ENCODE measurements at regions of chr14 and their contacts with region 1.

Region 1: DNA sequence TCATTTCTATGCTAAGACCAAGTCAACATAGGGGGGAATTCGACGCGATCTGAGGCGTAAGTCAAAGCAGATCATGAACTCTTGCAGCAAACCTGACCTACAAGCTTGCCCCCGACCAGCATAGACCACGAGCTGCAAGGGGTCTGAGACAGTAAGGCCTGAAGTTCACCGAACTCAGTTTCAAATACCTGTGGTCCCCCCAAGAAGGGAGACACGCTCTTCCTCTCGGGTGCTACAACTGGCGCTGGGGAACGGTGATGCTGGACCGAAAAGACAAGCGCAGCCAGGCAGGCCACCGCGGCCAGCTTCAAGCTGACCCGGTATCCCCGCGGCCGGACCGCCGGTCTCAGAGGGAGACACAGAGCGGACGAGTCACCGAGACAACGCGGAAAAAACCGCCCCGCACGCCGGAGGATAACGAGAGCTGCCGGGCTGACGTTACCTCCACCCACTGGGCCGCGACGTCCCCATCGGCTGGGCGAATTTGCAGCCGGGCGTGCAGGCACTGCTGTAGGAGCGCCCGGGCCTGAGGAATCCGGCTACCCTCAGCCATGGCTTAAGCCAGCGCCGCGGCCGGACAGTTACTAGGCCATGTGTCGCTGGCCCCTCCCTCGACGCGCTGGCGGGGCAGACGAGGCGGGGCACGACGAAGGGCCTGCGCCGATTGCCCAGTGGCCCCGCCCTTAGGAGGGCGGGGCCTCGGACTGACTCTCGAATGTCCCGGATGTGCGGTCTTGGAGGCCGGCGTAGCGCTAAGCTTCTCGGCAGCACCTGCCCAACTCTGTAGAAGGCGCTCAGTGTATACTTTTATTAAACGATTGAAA is at the start of gene DTD2:
- DNase-seq: peak; percentile 89
- H3K4me3 Mint-ChIP-seq: peak within 1 kb of the TSS; percentile 96
- H3K27ac Mint-ChIP-seq: peak within 1 kb of the TSS; percentile 95
- H3K4me1 Mint-ChIP-seq: peaks cover 43% of the 10 kb centered on the region
- H3K27me3 Mint-ChIP-seq: peaks cover 2% of the 10 kb centered on the region
- total RNA-seq, gene DTD2: 29.0 and 30.6 TPM in 2 replicates

Region 2: DNA sequence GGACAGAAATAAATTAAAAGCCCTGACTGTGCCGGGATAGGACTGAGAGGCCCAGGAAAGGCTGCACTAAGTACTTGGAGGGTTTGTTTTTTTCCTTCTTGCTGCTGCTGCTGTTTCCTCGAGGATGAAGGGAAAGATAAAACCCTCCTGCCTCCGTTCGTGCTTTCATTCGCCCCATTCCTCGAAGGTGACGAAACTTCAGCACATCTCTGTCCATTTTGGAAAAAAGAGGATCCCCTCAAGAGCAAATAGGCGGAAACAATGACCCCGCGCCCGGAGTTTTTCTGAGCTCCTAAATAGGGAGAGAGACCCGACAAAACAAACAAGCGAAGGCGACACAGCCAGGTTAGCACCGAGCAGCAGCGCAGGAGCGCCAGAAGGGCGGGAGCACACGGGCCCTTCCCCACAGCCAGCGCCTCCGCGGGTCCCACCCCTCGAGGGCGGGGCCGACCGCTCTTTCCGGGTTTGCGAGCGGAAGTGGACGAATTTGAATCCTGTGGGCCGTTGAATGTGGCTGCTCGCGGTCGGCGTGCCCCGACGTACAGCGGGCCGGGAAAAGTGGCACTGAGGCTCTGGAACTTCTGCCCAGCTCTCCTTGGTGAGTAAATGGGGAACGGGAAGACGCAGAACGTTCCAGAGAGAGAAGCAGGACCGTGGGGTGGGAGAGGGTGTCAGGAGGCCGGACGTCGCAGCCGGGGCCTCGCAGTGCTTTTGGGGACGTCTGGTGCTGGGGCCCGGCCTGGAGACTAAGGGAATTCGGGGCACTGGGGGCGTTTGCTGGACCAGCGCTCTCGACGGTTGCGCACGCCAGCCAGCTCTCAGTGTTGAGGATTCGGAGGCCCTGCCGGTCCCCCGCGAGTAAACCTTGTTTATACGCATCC is 898.1 kb before region 1 on chr14 and contains the start of gene G2E3:
- intact Hi-C with region 1: loop called (anchors 1 kb)
- DNase-seq: peak; percentile 90
- H3K4me3 Mint-ChIP-seq: peak within 1 kb of the TSS; percentile 100
- H3K27ac Mint-ChIP-seq: peak within 1 kb of the TSS; percentile 99
- H3K4me1 Mint-ChIP-seq: peaks cover 33% of the 10 kb centered on the region
- H3K27me3 Mint-ChIP-seq: peaks cover 4% of the 10 kb centered on the region
- total RNA-seq, gene G2E3: 21.5 and 24.1 TPM in 2 replicates

Region 3: DNA sequence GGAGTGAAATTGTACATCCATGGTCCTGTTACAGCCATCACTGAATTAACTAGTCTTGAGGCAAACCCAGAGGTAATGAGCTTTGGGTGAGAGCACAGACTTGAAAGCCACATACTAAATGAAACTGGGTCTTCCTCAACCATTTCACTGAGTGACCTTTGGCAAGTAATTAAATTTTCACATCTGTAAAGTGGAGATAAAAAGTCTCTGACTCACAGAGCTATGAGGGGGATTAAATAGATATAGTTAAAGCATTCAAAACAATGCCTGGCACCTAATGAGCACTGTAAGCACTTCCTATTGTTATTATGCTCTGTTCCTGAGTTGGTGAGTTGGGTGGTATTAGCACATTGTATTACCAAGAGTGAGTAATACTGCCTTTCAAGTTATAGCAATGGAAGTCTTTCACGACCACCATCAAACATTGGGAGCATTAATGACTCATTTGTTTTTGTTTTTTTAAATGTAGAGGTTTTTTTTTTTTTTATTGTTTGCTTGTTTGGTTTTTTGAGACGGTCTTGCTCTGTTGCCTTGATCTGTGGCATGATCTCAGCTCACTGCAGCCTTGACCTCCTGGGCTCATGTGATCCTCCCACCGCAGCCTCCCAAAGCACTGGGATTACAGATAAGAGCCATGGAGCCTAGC is 418.4 kb before region 1 on chr14:
- intact Hi-C with region 1: no loop called
- DNase-seq: no peak
- H3K4me3 Mint-ChIP-seq: no peak overlapping the region
- H3K27ac Mint-ChIP-seq: no peak overlapping the region
- H3K4me1 Mint-ChIP-seq: no peaks in the 10 kb centered on the region
- H3K27me3 Mint-ChIP-seq: no peaks in the 10 kb centered on the region

Region 4: DNA sequence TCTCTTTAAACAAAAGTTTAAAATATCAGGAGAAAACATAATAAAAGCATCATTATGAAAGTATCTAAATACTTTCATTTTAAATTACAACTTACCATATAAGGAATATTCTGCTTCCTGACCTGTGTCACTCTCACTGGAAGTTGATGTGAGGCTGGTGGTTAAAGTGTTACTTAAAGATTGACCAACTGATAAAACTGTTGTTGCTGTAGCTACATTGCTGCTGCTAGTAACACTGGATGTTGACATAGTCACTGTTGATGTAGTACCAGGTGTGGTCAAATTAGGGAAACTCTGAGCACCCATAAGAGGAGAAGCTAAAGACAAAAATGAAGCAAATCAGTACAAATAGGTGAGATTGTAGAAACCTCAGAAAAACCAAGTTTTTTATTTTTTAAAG is 329.4 kb before region 1 on chr14:
- intact Hi-C with region 1: loop called (anchors 10 kb)
- DNase-seq: peak; percentile 56
- H3K4me3 Mint-ChIP-seq: peak overlapping the region; percentile 16
- H3K27ac Mint-ChIP-seq: peak overlapping the region; percentile 64
- H3K4me1 Mint-ChIP-seq: peaks cover 31% of the 10 kb centered on the region
- H3K27me3 Mint-ChIP-seq: no peaks in the 10 kb centered on the region

Region 5: GRCh38 chr14:31420319-31421111 is 36.5 kb before region 1 on chr14 and contains the start of gene HEATR5A:
- intact Hi-C with region 1: loop called (anchors 1 kb)
- DNase-seq: peak; percentile 92
- H3K4me3 Mint-ChIP-seq: peak within 1 kb of the TSS; percentile 98
- H3K27ac Mint-ChIP-seq: peak within 1 kb of the TSS; percentile 90
- H3K4me1 Mint-ChIP-seq: peaks cover 26% of the 10 kb centered on the region
- H3K27me3 Mint-ChIP-seq: peaks cover 2% of the 10 kb centered on the region
- total RNA-seq, gene HEATR5A: 26.4 and 31.0 TPM in 2 replicates

Region 6: DNA sequence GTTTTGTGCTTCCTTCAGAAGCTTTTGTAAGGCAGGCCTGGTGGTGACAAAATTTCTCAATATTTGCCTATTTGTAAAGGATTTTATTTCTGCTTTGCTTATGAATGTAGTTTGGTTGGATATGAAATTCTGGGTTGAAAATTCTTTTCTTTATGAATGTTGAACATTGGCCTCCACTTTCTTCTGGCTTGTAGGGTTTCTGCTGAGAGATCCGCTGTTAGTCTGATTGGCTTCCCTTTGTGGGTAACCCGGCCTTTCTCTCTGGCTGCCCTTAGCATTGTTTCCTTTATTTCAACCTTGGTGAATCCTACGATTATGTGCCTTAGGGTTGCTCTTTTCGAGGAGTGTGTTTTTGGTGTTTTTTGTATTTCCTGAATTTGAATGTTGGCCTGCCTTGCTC is 162.4 kb after region 1 on chr14:
- intact Hi-C with region 1: no loop called
- DNase-seq: no peak
- H3K4me3 Mint-ChIP-seq: no peak overlapping the region
- H3K27ac Mint-ChIP-seq: no peak overlapping the region
- H3K4me1 Mint-ChIP-seq: no peaks in the 10 kb centered on the region
- H3K27me3 Mint-ChIP-seq: no peaks in the 10 kb centered on the region

Region 7: DNA sequence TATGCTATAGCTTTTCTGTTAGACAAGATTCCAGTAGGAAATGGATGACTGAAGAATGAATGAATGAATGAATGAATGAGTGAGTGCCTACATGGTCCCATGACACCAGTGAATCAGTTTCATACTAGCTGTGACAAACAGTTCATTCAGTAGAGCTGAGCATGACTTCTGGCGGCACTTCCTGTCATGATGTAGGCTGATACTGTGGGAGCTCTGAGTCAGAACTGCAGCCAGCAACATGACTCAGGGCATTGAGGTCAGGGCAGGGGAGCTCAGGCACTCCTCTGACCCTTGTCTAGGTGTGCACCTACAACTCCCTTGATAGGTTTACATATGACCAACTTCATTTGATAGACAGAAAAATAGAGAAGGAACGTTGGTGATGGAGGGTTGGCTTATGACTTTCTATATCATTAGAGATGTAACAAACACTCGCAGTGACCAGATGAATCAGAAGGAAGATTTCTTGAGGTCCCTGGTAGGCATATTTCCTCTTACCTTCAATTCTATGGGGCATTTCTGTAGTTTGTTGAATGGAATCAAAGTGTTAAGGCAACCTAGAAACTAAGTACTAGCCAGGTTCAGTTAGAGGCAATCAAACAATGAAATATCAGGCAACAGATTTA is 480.8 kb after region 1 on chr14:
- intact Hi-C with region 1: loop called (anchors 10 kb)
- DNase-seq: peak; percentile 64
- H3K4me3 Mint-ChIP-seq: no peak overlapping the region
- H3K27ac Mint-ChIP-seq: peak overlapping the region; percentile 7
- H3K4me1 Mint-ChIP-seq: peaks cover 10% of the 10 kb centered on the region
- H3K27me3 Mint-ChIP-seq: peaks cover 3% of the 10 kb centered on the region

Region 8: GRCh38 chr14:32252030-32252670 is 795.1 kb after region 1 on chr14:
- intact Hi-C with region 1: loop called (anchors 5 kb)
- DNase-seq: peak; percentile 35
- H3K4me3 Mint-ChIP-seq: no peak overlapping the region
- H3K27ac Mint-ChIP-seq: no peak overlapping the region
- H3K4me1 Mint-ChIP-seq: no peaks in the 10 kb centered on the region
- H3K27me3 Mint-ChIP-seq: no peaks in the 10 kb centered on the region

Region 9: DNA sequence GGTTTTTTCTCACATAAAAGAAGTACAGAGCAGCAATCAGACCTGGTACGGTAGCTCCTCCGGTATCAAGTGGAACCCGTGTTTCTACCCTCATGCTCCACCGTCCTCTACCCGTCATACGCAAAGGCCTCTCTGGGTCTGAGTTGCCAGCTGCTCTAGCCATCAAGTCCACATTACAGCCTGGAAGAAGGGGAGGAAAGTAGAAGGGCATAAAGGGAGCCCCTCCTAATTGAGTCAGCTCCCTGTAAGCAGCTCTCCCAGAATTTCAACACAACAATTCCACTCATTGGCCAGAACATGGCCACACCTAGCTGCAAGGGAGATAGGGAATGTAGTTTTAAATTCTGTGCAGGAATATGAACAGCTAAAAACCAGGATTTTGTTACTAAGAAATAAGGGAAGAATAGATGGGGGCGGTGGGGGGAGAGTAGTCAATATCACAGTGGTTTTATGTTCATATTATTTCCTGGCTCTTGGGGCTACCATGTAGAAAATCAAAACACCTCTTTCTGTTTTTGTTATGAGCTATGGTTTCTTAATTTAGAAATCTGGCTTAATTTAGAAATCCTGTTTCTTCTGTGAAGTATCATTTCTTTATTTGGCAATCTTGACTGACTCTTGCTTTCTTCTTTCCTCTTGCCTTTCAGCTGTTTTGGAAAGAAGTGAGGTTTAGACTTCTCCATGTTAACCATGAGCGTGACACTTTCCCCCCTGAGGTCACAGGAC is 975.9 kb after region 1 on chr14:
- intact Hi-C with region 1: no loop called
- DNase-seq: no peak
- H3K4me3 Mint-ChIP-seq: no peak overlapping the region
- H3K27ac Mint-ChIP-seq: no peak overlapping the region
- H3K4me1 Mint-ChIP-seq: no peaks in the 10 kb centered on the region
- H3K27me3 Mint-ChIP-seq: no peaks in the 10 kb centered on the region